Ascending aorta (tissue), 2 donors: ENCODE measurements at regions of chr17 and their contacts with region 1.

Region 1: GRCh38 chr17:10121971-10122707 is 76.3 kb downstream of the GAS7 start:
- DNase-seq: no peak
- H3K4me3 ChIP-seq: no peak overlapping the region
- H3K27ac ChIP-seq: no peak overlapping the region
- H3K4me1 ChIP-seq: no peaks in the 10 kb centered on the region
- H3K27me3 ChIP-seq: no peaks in the 10 kb centered on the region
- CTCF ChIP-seq: no peak

Region 2: GRCh38 chr17:10107326-10108170 is 14.6 kb before region 1 on chr17:
- intact Hi-C with region 1: loop called (anchors 2 kb)
- DNase-seq: no peak
- H3K4me3 ChIP-seq: no peak overlapping the region
- H3K27ac ChIP-seq: no peak overlapping the region
- H3K4me1 ChIP-seq: no peaks in the 10 kb centered on the region
- H3K27me3 ChIP-seq: no peaks in the 10 kb centered on the region
- CTCF ChIP-seq: no peak

Region 3: GRCh38 chr17:10135539-10136257 is 13.6 kb after region 1 on chr17:
- intact Hi-C with region 1: no loop called
- DNase-seq: peak in 1 of 2 donors; percentile 75
- H3K4me3 ChIP-seq: no peak overlapping the region
- H3K27ac ChIP-seq: no peak overlapping the region
- H3K4me1 ChIP-seq: no peaks in the 10 kb centered on the region
- H3K27me3 ChIP-seq: no peaks in the 10 kb centered on the region
- CTCF ChIP-seq: no peak

Region 4: DNA sequence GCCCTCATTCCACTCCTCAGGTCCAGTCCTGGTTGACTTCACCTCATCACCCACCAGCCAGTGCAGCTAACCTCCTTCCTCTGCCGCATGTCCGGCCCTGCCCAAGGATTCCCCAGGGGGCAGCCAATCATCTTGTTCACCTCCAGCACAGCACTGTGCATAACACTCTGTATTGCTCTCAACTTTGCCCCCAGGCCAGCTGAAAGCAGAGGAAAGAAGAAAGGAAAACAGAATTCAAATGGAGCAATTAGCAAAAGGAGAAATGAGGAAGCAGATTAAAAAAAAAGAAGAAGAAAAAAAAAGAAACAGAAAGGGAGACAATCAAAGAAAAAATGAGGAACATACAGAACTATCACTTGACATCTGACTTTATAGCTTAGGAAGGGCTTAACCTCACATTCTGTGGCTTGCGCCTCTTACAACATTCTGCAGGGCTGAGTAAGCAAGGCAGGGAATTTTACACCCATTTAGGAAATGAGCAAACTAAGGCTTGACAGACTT is 50.2 kb after region 1 on chr17:
- intact Hi-C with region 1: no loop called
- DNase-seq: no peak
- H3K4me3 ChIP-seq: no peak overlapping the region
- H3K27ac ChIP-seq: no peak overlapping the region
- H3K4me1 ChIP-seq: no peaks in the 10 kb centered on the region
- H3K27me3 ChIP-seq: no peaks in the 10 kb centered on the region
- CTCF ChIP-seq: no peak

Region 5: GRCh38 chr17:10492004-10492403 is 369.9 kb after region 1 on chr17:
- intact Hi-C with region 1: no loop called
- DNase-seq: no peak
- H3K4me3 ChIP-seq: no peak overlapping the region
- H3K27ac ChIP-seq: no peak overlapping the region
- H3K4me1 ChIP-seq: no peaks in the 10 kb centered on the region
- H3K27me3 ChIP-seq: no peaks in the 10 kb centered on the region
- CTCF ChIP-seq: no peak